ENCODE measurements at regions of chr10 and their contacts with region 1.

Region 1: GRCh38 chr10:31318854-31319601 is at the start of gene ZEB1:
- DNase-seq: peak; percentile 89 to 92
- ATAC-seq: peak; percentile 56 to 75
- H3K4me3 ChIP-seq: peak within 1 kb of the TSS; percentile 91 to 96 (median 94)
- H3K27ac ChIP-seq: peak within 1 kb of the TSS; percentile 97 to 99 (median 98)
- H3K4me1 ChIP-seq: peaks cover 29 to 50% of the 10 kb centered on the region in 2 donors
- H3K27me3 ChIP-seq: no peaks in the 10 kb centered on the region
- CTCF ChIP-seq: peak; percentile 56 to 74 (median 66)
- POLR2A ChIP-seq: peak; percentile 61 to 77
- total RNA-seq, gene ZEB1: 67.4 to 175 (median 137) TPM

Region 2: DNA sequence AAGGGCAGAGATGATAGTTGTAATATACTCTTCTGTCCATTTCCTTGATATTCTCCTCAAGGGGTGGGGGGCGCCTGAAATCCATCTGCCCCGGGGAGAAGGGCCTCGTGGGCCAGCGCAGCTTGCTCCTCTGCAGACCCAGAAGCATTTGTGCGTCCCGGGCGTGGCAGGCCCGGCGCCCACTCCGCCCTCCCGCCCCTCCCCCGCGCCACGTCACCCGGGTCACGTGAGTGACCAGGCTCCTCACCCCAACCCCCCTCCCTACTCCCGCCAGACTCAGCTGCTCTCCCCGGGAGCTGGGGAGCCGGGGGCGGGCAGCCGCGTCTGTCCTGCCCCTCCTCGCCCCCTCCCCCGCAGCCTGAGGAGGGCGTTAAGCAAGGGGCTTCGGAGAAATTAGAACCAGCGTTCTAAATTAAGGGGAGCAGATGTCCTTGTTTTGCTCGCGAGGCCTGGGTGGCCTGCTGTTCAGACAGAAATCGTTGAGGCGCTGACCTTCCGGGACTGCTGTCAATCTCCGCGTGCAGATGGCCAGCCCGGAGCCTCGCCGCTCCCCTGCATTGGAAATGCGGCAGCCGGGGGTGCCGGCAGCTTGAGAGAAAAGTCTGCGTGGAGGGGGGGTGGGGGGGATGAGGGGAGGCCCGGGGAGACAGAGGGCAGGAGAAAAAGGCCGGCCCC is 185.3 kb before region 1 on chr10:
- in situ Hi-C with region 1: no loop called
- intact Hi-C with region 1: loop called (anchors 5 kb)
- DNase-seq: peak; percentile 58 to 76
- ATAC-seq: peak; percentile 82 to 88
- H3K4me3 ChIP-seq: peak overlapping the region; percentile 63 to 94 (median 68)
- H3K27ac ChIP-seq: peak overlapping the region; percentile 90 to 94 (median 93)
- H3K4me1 ChIP-seq: peaks cover 4 to 13% of the 10 kb centered on the region in 2 donors
- H3K27me3 ChIP-seq: no peaks in the 10 kb centered on the region
- CTCF ChIP-seq: no peak
- POLR2A ChIP-seq: peak; percentile 74

Region 3: DNA sequence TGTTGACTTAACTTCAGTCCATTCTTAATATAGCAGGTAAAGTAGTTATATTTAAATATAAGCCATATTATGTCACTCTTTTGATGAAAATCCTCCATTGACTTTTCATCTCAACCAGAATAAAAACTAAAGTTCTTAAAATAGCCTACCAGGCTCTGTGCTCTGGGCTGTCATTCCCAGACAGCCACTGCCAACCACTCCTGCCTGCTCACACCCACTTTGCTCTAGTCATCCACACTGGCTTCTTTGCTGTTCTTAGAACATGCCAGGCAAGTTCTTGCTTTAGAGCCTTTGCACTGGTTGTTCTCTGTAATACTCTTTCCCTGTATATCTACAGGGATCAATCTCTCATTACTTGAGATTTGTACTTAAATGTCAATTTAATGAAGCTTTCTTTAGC is 80.6 kb after region 1 on chr10:
- in situ Hi-C with region 1: no loop called
- intact Hi-C with region 1: loop called (anchors 1 kb)
- DNase-seq: peak; percentile 75 to 85
- ATAC-seq: peak; percentile 89 to 90
- H3K4me3 ChIP-seq: peak overlapping the region in 2 of 4 donors; percentile 18 to 27
- H3K27ac ChIP-seq: peak overlapping the region; percentile 81 to 92 (median 90)
- H3K4me1 ChIP-seq: peaks cover 87 to 90% of the 10 kb centered on the region in 2 donors
- H3K27me3 ChIP-seq: no peaks in the 10 kb centered on the region
- CTCF ChIP-seq: no peak
- POLR2A ChIP-seq: peak; percentile 9 to 35

Region 4: DNA sequence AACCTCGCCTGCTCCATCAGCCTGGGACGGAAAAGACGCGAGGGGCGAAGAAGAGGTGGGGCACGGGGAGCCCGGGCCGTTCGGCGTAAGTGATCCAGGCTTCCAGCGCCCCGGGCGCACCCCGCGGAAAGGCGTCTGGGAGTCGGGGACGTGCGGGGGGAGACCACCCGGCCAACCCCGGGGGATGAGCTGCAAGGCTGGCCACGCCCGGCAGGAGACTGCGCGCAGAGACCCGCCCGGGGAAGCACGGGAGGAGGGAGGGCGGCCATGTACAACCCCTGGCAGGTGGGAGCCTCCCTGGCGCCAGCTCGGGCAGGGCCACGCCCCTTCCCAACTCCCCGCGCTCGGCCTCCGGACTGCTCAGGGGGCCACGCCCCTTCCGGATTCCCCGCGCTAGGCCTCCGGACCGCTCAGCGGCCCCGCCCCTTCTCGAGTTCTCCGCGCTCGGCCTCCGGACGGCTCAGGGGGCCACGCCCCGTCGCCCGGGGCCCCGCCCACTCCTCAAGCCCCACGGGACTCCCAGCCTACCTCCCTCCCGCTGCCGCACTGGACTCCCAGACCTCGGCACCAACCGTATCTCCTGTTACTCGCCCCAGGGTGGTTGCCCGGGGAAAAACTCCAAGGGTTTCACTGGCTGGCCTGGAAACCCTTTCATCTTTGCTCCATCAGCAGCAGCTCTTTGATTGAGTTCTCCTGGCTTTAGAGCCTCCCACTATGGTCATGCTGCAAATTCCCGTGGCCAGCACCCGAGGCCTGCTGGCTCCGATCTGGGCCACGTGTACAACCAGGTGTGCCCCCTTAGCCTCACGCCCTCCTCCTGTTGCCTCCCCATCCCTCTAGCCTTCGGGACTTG is 284.4 kb after region 1 on chr10:
- in situ Hi-C with region 1: no loop called
- intact Hi-C with region 1: loop called (anchors 2 kb)
- DNase-seq: peak; percentile 95 to 97
- ATAC-seq: peak; percentile 75
- H3K4me3 ChIP-seq: peak overlapping the region; percentile 68 to 97 (median 76)
- H3K27ac ChIP-seq: peak overlapping the region; percentile 92 to 99 (median 96)
- H3K4me1 ChIP-seq: peaks cover 14 to 19% of the 10 kb centered on the region in 2 donors
- H3K27me3 ChIP-seq: no peaks in the 10 kb centered on the region
- CTCF ChIP-seq: peak in 3 of 5 experiments; percentile 13 to 34 (median 23)
- POLR2A ChIP-seq: peak; percentile 85 to 86

Region 5: DNA sequence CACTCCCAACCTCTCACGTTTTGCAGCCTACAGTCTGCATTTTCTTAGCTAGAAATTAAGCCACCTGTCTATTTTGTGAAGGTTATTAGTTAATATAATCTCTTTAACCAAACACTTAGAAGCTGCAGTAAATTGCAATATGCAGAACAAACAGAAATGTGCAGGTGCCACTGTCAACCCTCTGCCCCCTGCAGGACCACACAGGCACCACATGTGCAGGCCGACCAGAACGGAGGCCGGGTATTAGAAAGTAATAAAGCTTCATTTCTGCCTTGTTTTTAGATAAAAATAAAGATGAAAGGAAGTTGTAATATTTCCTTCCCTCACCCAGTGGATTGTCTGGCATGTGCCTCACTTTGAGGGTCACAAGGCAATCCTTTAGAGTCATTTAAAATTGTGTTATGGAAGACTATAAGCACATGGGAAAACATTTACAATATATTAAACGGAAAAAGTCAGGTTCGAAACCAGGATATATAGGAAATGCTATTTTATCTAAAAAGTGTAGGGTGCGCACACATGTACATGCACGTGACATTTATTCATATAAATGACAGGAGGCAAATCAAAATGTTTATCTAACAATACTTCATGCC is 451.4 kb after region 1 on chr10:
- in situ Hi-C with region 1: no loop called
- intact Hi-C with region 1: loop called (anchors 10 kb)
- DNase-seq: no peak
- ATAC-seq: no peak
- H3K4me3 ChIP-seq: no peak overlapping the region
- H3K27ac ChIP-seq: peak overlapping the region in 2 of 4 donors; percentile 92 to 95
- H3K4me1 ChIP-seq: peaks cover 13 to 36% of the 10 kb centered on the region in 2 donors
- H3K27me3 ChIP-seq: no peaks in the 10 kb centered on the region
- CTCF ChIP-seq: peak; percentile 59 to 72 (median 65)
- POLR2A ChIP-seq: no peak

Measured in gastrocnemius medialis (tissue), 4 donors.